Activated naive CD4-positive, alpha-beta T cell treated with anti-CD3 and anti-CD28 coated beads, Interleukin-2, amount 10 ng/mL, durations not matched to agents 7 days and 5 days (primary cell): ENCODE measurements at regions of chr4 and their contacts with region 1.

Region 1: DNA sequence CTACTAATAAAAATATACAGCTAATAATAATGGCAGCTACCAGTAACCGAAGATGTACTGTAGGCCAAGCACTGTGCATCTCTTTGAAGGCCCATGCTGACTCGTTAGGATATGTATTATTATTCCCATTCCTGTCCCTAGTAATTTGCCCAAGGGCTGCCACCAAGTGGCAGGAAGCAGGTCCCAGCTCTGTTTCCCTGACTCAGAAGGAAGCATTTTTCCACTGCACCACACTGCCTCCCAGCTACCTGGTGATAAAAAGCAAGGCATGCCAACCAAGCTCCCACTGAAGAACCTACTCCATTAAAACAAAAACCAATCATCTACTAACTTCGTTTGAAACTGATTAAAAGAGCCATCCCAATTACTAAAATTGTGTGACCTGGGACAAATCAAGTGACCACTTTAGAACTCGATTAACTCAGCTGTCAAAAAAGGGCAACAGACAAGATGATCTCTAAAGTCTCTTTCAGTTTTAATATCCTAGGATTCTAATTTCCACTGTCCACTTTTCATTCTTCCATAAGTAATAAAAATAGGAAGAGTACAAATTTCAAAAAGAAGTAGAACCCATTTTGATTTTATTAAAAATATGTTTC is 24.3 kb upstream of the PGM2 start:
- DNase-seq: no peak
- H3K4me3 Mint-ChIP-seq: no peak overlapping the region
- H3K27ac Mint-ChIP-seq: no peak overlapping the region
- H3K4me1 Mint-ChIP-seq: no peaks in the 10 kb centered on the region
- H3K27me3 Mint-ChIP-seq: peaks cover 23% of the 10 kb centered on the region

Region 2: DNA sequence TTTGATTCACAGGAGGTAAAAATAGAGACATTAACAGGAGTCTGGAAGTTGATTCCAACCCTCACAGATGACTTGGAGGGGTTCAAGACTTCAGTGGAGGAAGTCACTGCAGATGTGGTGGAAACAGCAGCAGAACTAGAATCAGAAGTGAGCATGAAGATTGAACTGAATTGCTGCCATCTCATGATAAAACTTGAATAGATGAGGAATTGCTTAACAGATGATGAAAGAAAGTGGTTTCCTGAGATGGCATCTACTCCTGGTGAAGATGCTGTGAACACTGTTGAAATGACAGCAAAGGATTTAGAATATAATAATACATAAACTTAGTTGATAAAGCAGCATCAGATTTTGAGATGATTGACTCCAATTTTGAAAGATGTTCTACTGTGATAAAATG is 192.5 kb before region 1 on chr4:
- CTCF ChIA-PET with region 1: no interaction called
- DNase-seq: no peak
- H3K4me3 Mint-ChIP-seq: no peak overlapping the region
- H3K27ac Mint-ChIP-seq: no peak overlapping the region
- H3K4me1 Mint-ChIP-seq: peaks cover 6% of the 10 kb centered on the region
- H3K27me3 Mint-ChIP-seq: peaks cover 4% of the 10 kb centered on the region

Region 3: DNA sequence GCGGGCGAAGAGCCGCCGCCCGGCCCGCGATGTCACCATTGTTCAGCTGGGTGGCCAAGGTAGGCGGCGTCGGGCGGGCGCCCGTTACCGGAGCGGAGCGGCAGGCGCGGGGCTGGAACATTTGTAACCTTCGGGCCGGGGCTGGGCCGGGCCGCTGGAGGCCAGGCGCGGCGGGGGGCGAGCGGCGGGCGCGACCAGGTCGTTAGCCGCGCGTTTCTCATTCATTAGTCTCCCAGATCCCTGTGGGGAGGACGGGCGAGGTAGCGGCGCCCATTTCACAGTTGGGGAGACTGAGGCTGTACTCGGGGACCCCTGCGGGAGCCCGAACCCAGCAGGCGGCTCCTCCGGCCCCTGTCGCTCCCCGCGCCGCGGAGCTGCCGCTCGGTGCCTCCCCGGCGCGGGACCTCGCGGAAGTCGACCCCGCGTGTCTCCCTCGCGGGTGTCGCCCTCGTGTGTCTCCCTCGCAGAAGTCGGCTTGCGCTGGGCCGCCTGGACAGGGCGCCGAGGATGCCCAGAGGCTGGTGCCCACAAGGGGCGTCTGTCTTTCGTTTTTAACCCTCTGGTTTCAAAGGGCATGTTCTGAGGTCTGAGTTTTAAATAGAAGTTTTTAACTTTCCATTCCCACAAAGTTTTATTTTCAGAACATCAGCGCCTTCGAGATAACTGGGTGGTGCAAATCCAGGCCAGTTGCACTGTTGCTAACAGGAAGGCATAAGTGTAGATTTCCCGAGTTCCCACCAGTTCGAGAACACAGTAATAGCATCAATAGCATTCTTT is 175.5 kb after region 1 on chr4:
- CTCF ChIA-PET with region 1: interaction called, 13 read pairs
- DNase-seq: peak; percentile 82
- H3K4me3 Mint-ChIP-seq: peak overlapping the region; percentile 81
- H3K27ac Mint-ChIP-seq: peak overlapping the region; percentile 84
- H3K4me1 Mint-ChIP-seq: peaks cover 43% of the 10 kb centered on the region
- H3K27me3 Mint-ChIP-seq: no peaks in the 10 kb centered on the region

Region 4: DNA sequence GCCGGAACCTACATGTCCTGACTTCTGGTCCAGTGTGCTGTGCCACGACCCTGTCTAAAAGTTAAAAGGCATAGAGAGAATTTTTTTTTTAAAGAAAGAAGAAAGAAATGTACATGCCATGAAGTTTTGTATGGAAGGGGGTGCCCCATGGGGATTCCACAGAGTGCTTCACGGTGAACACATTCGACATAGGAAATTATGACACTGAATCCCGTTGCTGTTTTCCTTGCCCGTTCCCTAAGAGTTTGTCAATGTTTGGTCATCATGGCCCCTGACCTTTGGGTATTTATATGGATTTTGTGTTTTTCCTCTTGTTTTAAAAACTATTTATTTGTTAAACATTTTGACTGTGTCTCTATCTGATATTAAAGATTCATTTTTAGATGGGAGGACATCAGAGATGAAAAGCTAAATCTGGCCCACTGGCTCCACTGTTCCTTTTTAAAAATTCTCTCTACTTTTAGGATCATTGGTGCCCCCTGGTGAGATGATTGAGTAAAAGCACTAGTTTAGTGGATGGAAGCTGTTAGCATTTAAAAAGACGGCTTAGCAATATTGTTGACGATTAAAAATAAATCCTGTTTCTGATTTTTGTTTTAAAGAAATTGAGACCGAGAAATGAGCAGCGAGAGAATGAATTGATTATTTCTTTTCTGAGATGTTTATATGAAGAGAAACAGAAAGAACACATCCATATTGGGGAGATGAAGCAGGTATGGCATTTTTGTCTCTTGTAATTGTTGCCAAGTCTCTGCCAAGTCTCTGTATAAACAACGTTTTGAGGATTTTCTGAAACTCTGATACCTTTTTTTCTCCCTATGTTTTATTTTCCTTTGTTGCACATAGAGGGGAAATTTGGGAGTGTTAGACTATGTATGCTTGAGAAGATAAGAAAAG is 233.1 kb after region 1 on chr4:
- CTCF ChIA-PET with region 1: interaction called, 27 read pairs
- DNase-seq: peak; percentile 42
- H3K4me3 Mint-ChIP-seq: no peak overlapping the region
- H3K27ac Mint-ChIP-seq: no peak overlapping the region
- H3K4me1 Mint-ChIP-seq: no peaks in the 10 kb centered on the region
- H3K27me3 Mint-ChIP-seq: no peaks in the 10 kb centered on the region